Activated B cell treated with CpG ODN at 0.5 μM for 24 hours (primary cell): ENCODE measurements at regions of chr15 and their contacts with region 1.

Region 1: GRCh38 chr15:32657198-32657883 is 15.8 kb downstream of the SCG5 start:
- DNase-seq: no peak
- ATAC-seq: no peak
- H3K4me3 Mint-ChIP-seq: no peak overlapping the region
- H3K27ac Mint-ChIP-seq: no peak overlapping the region
- H3K4me1 Mint-ChIP-seq: no peaks in the 10 kb centered on the region
- H3K27me3 Mint-ChIP-seq: no peaks in the 10 kb centered on the region
- CTCF ChIP-seq: no peak

Region 2: GRCh38 chr15:32956006-32956405 is 298.7 kb after region 1 on chr15:
- CTCF ChIA-PET with region 1: interaction called, 67 read pairs
- POLR2A ChIA-PET with region 1: no interaction called
- intact Hi-C with region 1: loop called (anchors 1 kb)
- DNase-seq: no peak
- ATAC-seq: no peak
- H3K4me3 Mint-ChIP-seq: no peak overlapping the region
- H3K27ac Mint-ChIP-seq: no peak overlapping the region
- H3K4me1 Mint-ChIP-seq: no peaks in the 10 kb centered on the region
- H3K27me3 Mint-ChIP-seq: peaks cover 16% of the 10 kb centered on the region
- CTCF ChIP-seq: no peak